ENCODE measurements at regions of chr17 and their contacts with region 1.

Region 1: GRCh38 chr17:8189711-8190477 is at the start of gene BORCS6:
- DNase-seq: peak; percentile 99
- H3K4me3 Mint-ChIP-seq: no peak within 1 kb of the TSS
- H3K27ac Mint-ChIP-seq: peak within 1 kb of the TSS; percentile 59
- H3K4me1 Mint-ChIP-seq: no peaks in the 10 kb centered on the region
- H3K27me3 Mint-ChIP-seq: no peaks in the 10 kb centered on the region
- CTCF ChIP-seq: no peak
- total RNA-seq, gene BORCS6: 3.9 and 4.4 TPM in 2 replicates

Region 2: DNA sequence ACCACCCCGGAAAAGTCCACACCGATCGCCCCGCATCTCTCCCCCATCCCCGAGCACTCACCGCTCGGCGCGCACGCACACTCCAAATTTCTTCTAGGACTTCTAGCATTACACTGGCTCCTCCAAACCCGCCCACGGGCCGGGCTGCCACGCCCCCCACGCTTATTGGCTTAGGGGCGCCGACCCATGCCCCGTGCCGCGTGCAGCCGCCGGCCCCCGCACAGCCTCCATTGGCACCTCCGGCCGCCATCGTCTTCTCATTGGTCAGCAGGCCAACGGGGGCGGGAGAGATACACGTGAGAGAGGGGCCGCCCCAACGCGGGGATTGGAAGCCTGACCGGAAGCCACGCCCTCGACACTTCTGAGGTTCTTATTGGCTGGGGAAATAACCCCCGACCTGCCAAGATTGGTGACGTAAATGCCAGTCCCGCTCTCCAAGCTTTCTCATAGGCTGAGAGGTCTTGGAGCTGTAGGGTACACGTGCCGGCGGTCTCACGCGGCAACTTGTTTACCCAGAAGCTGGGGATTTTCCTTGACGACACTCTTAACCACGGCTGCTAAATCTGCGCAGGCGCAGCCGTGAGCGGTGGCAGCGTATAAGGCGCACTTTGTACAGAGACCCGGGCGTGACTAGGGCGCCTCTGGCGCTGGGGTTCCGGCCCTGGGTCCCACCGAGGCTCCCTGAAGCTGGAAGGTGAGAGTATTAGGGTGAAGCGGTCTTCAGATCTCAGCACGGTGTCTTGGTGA is 33.5 kb before region 1 on chr17:
- CTCF ChIA-PET with region 1: interaction called, 4 read pairs
- POLR2A ChIA-PET with region 1: interaction called, 203 read pairs
- intact Hi-C with region 1: loop called (anchors 2 kb)
- DNase-seq: peak; percentile 100
- H3K4me3 Mint-ChIP-seq: no peak overlapping the region
- H3K27ac Mint-ChIP-seq: no peak overlapping the region
- H3K4me1 Mint-ChIP-seq: peaks cover 38% of the 10 kb centered on the region
- H3K27me3 Mint-ChIP-seq: no peaks in the 10 kb centered on the region
- CTCF ChIP-seq: no peak

Region 3: GRCh38 chr17:8204761-8205555 is 15.1 kb after region 1 on chr17:
- CTCF ChIA-PET with region 1: interaction called, 4 read pairs
- POLR2A ChIA-PET with region 1: interaction called, 30 read pairs
- intact Hi-C with region 1: no loop called
- DNase-seq: no peak
- H3K4me3 Mint-ChIP-seq: no peak overlapping the region
- H3K27ac Mint-ChIP-seq: no peak overlapping the region
- H3K4me1 Mint-ChIP-seq: no peaks in the 10 kb centered on the region
- H3K27me3 Mint-ChIP-seq: no peaks in the 10 kb centered on the region
- CTCF ChIP-seq: no peak

Region 4: DNA sequence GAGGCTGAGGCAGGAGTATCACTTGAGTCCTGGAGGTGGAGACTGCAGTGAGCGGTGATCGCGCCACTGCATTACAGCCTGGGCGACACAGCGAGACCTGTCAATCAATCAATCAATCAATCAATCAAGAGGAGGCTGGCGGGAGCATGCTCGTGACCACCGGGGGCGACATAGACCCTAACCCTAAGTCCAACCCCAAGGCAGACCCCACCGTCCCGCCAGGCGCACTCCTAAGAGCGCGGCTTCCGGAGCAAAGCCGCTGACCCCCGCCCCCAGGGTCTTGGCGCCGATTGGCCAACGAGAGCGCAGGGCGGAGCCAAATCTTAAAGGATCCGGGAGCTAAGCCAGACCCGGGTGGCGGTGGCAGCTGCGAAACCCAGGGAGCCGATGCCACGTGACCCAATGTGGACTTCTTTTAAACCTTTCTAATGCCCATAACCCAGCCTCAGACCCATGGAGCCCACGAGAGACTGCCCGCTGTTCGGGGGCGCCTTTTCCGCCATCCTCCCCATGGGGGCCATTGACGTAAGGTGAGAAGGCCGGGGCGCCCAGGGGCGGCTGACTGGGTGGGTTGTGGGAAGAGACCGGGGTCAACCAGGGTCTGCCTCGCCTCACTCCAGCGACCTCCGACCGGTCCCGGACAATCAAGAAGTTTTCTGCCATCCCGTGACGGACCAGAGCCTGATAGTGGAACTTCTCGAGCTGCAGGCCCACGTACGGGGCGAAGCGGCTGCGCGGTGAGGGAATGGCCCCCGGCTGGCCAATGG is 98.6 kb after region 1 on chr17 and contains the start of gene RANGRF:
- CTCF ChIA-PET with region 1: interaction called, 3 read pairs
- POLR2A ChIA-PET with region 1: interaction called, 17 read pairs
- intact Hi-C with region 1: no loop called
- DNase-seq: peak; percentile 85
- H3K4me3 Mint-ChIP-seq: peak within 1 kb of the TSS; percentile 90
- H3K27ac Mint-ChIP-seq: peak within 1 kb of the TSS; percentile 88
- H3K4me1 Mint-ChIP-seq: peaks cover 10% of the 10 kb centered on the region
- H3K27me3 Mint-ChIP-seq: no peaks in the 10 kb centered on the region
- CTCF ChIP-seq: no peak
- total RNA-seq, gene RANGRF: 38.6 and 41.8 TPM in 2 replicates

Region 5: DNA sequence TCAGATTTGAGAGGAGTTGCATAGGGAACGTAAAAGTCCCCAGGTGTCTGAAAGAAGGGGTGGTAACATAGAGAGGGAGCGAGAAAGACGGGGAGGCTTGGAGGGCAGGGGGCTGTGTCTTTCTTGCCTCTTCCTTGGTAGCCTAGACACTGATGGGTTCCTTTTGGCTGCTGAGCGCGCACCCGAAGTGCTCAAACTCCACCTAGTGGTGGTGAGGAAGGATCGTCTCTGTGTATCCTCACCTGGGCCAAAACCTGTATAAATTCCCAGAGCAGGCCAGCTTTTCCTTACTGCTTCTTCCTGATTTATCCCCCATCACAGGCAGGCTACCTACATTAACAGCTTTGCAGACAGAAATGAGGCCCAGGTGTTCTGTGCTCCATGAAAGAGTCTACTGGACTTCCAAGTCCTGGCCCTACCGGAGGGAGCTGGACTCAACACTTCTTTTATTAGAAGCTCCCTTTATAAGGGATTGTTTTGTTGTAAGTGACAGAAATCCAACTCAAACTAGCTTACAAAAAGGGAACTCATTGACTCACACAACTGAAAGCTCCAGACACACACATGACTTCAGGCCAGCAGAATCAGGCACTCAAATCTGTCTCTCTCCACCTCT is 110.8 kb after region 1 on chr17:
- CTCF ChIA-PET with region 1: interaction called, 8 read pairs
- POLR2A ChIA-PET with region 1: interaction called, 18 read pairs
- intact Hi-C with region 1: loop called (anchors 1 kb)
- DNase-seq: peak; percentile 77
- H3K4me3 Mint-ChIP-seq: no peak overlapping the region
- H3K27ac Mint-ChIP-seq: no peak overlapping the region
- H3K4me1 Mint-ChIP-seq: peaks cover 13% of the 10 kb centered on the region
- H3K27me3 Mint-ChIP-seq: no peaks in the 10 kb centered on the region
- CTCF ChIP-seq: peak; percentile 72

Region 6: DNA sequence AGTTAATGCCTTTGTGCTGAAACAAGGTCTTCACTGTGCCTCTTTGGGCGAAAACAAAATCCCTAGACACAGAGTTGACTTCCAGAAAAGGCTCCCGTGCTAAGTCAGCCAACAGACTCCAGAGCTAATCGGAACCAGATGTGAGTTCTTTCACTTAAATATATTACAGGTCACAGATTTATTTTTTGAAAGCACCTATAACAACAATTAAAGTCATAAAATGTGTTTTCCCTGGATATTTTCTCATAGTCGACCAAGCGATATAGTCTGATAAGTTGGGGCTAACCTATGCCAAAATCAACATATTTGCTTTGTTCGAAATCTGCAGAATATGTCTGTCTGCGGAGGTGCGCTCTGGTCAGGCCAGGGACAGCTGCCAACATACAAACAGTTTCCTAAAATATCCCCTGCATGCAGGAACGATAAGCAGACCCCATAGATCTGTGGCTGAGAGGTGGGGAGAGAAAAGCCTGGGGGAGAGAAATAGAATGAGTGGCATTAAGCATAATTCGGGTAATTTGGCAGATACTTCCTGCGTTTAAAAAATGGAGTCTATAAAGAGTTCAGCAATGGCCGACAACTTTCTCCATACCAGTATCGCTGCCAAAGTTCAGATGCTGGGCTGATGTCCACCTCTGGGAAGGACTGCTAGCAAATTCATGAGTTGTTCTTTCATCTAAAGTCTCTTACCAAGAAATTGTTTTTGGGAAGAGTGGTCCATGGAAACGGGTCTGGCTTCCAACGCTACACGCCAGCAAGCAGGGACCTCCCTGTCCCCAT is 491.5 kb after region 1 on chr17:
- CTCF ChIA-PET with region 1: no interaction called
- POLR2A ChIA-PET with region 1: no interaction called
- intact Hi-C with region 1: no loop called
- DNase-seq: no peak
- H3K4me3 Mint-ChIP-seq: no peak overlapping the region
- H3K27ac Mint-ChIP-seq: no peak overlapping the region
- H3K4me1 Mint-ChIP-seq: no peaks in the 10 kb centered on the region
- H3K27me3 Mint-ChIP-seq: peaks cover 23% of the 10 kb centered on the region
- CTCF ChIP-seq: no peak

Measured in MCF 10A (cell line).